ENCODE measurements at regions of chr1 and their contacts with region 1.

Region 1: GRCh38 chr1:83905315-83905907 is 93.5 kb downstream of the TTLL7 start:
- DNase-seq: peak in 1 of 2 donors; percentile 61
- ATAC-seq: peak in 2 of 3 donors; percentile 44 to 57
- H3K4me3 ChIP-seq: no peak overlapping the region
- H3K4me3 Mint-ChIP-seq: no peak overlapping the region
- H3K27ac ChIP-seq: no peak overlapping the region
- H3K27ac Mint-ChIP-seq: no peak overlapping the region
- H3K4me1 ChIP-seq: no peaks in the 10 kb centered on the region
- H3K4me1 Mint-ChIP-seq: no peaks in the 10 kb centered on the region
- H3K27me3 ChIP-seq: no peaks in the 10 kb centered on the region
- H3K27me3 Mint-ChIP-seq: peaks cover 4 to 14% of the 10 kb centered on the region in 2 donors
- CTCF ChIP-seq: peak; percentile 83

Region 2: DNA sequence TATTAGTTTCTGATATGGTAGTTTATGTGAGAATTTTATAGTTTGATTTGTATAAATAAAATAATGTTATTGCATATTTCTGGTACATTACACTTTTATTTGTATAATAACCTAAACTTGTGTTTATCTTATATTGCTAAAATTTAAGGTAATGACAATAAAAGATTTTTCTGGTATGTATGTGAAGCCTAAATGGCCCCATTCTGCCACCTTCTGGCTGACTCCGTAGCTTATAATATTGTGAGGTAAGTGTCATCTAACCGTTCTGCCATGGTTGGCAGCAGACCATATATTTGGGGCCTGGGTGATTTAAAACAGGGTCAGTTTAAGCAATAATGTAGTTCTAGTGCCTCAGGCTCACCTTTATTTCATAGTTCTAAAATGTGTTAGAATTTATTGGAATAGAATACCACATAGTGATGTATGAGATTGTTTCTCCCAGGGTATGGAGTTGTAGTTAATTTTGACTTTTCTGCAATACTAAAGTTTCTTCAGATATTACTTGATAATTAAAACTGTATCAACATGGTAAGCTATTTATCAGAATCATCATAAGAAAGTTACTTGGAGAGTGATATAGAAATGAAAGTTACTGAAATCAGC is 217.5 kb after region 1 on chr1:
- intact Hi-C with region 1: loop called (anchors 5 kb)
- DNase-seq: peak; percentile 21 to 76
- ATAC-seq: peak in 2 of 3 donors; percentile 71 to 82
- H3K4me3 ChIP-seq: no peak overlapping the region
- H3K4me3 Mint-ChIP-seq: no peak overlapping the region
- H3K27ac ChIP-seq: no peak overlapping the region
- H3K27ac Mint-ChIP-seq: no peak overlapping the region
- H3K4me1 ChIP-seq: no peaks in the 10 kb centered on the region
- H3K4me1 Mint-ChIP-seq: no peaks in the 10 kb centered on the region
- H3K27me3 ChIP-seq: no peaks in the 10 kb centered on the region
- H3K27me3 Mint-ChIP-seq: no peaks in the 10 kb centered on the region
- CTCF ChIP-seq: peak; percentile 79

Region 3: DNA sequence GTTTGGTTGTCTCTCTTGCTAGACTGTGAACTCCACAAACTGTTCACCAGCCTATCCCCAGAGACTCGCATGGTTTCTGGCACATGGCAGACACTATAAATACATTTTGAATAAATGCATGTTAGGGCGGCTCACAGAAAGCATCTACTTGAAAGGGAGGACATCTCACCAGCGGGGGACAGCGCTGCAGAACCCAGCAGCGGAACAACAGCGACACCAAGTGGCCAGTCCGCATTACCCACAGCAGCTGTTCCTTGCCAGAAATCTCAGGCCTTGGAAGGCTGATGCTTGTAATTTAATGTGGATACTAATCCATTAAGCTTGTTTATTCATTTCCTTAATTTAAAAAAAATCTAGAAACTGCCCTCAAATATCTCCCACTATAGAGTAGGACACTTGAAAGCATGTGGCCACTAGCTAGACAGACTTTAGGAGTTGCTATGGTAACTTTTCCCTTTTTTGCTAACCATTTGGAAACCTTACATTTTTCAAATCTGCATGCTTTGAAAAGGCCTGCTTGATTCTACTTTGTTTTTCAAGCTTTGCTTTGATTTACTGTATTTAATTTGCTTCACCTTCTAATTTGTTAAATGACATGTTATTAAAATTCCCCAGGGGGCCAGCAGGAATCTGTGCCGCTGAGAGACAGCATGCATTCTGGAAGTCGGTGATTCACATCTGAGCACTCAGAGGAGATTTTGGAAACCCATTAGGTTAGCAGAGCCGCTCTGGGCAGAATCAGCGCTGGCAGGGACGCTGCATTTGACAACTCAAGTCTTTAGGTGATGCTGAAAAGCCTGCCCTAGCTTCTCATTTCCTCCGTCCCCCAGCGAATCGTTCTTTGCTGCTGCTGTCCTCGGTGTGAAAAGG is 848.3 kb after region 1 on chr1:
- intact Hi-C with region 1: loop called (anchors 5 kb)
- DNase-seq: peak; percentile 69 to 87
- ATAC-seq: peak; percentile 83 to 97 (median 96)
- H3K4me3 ChIP-seq: no peak overlapping the region
- H3K4me3 Mint-ChIP-seq: no peak overlapping the region
- H3K27ac ChIP-seq: no peak overlapping the region
- H3K27ac Mint-ChIP-seq: no peak overlapping the region
- H3K4me1 ChIP-seq: no peaks in the 10 kb centered on the region
- H3K4me1 Mint-ChIP-seq: peaks cover 4 to 5% of the 10 kb centered on the region in 2 donors
- H3K27me3 ChIP-seq: peaks cover 6% of the 10 kb centered on the region
- H3K27me3 Mint-ChIP-seq: peaks cover 10 to 37% of the 10 kb centered on the region in 2 donors
- CTCF ChIP-seq: peak; percentile 92

Region 4: GRCh38 chr1:84772428-84772943 is 867.1 kb after region 1 on chr1:
- intact Hi-C with region 1: loop called (anchors 5 kb)
- DNase-seq: peak; percentile 68 to 84
- ATAC-seq: peak; percentile 65 to 83 (median 82)
- H3K4me3 ChIP-seq: no peak overlapping the region
- H3K4me3 Mint-ChIP-seq: no peak overlapping the region
- H3K27ac ChIP-seq: no peak overlapping the region
- H3K27ac Mint-ChIP-seq: no peak overlapping the region
- H3K4me1 ChIP-seq: no peaks in the 10 kb centered on the region
- H3K4me1 Mint-ChIP-seq: no peaks in the 10 kb centered on the region
- H3K27me3 ChIP-seq: no peaks in the 10 kb centered on the region
- H3K27me3 Mint-ChIP-seq: peaks cover 11 to 15% of the 10 kb centered on the region in 2 donors
- CTCF ChIP-seq: peak; percentile 98

Region 5: GRCh38 chr1:84936116-84936810 is 1030.9 kb after region 1 on chr1:
- intact Hi-C with region 1: loop called (anchors 10 kb)
- DNase-seq: peak in 1 of 2 donors; percentile 83
- ATAC-seq: peak; percentile 78 to 86 (median 84)
- H3K4me3 ChIP-seq: no peak overlapping the region
- H3K4me3 Mint-ChIP-seq: no peak overlapping the region
- H3K27ac ChIP-seq: no peak overlapping the region
- H3K27ac Mint-ChIP-seq: no peak overlapping the region
- H3K4me1 ChIP-seq: peaks cover 3% of the 10 kb centered on the region
- H3K4me1 Mint-ChIP-seq: no peaks in the 10 kb centered on the region
- H3K27me3 ChIP-seq: no peaks in the 10 kb centered on the region
- H3K27me3 Mint-ChIP-seq: peaks cover 0 to 2% of the 10 kb centered on the region in 2 donors
- CTCF ChIP-seq: peak; percentile 95